ENCODE measurements at regions of chr1 and their contacts with region 1.

Region 1: DNA sequence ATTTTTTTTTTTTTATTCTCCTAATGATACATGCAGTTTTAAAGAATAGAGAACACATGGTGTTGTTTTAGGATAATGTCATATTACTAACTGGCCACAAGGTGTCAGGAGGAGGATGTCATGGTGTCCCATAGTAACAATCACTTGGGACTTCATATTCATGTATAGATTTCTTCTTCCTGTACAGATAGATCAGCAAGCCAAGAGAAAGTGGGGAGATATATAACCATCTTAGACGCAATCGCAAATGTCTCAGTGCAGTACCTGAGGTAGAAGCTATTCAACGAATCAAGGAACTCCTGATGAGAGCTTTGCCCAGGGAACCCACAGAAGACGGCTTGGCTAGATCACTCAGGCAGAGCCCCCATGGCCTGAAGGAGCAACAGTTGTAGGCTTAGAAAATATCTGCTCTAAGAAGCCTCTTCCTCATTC is 12.3 kb downstream of the OR2T11 start:
- DNase-seq: peak in 1 of 42 donors; percentile 18

Region 2: GRCh38 chr1:248730507-248731335 is 108.1 kb after region 1 on chr1:
- intact Hi-C with region 1: no loop called
- DNase-seq: no peak

Region 3: GRCh38 chr1:248807067-248807737 is 184.6 kb after region 1 on chr1:
- intact Hi-C with region 1: loop called (anchors 5 kb)
- DNase-seq: peak; percentile 57 to 88 (median 75)